ENCODE measurements at regions of chr14 and their contacts with region 1.

Region 1: GRCh38 chr14:67426983-67427606 is 15.1 kb upstream of the PLEK2 start:
- DNase-seq: no peak
- ATAC-seq: peak; percentile 95
- H3K4me3 ChIP-seq: no peak overlapping the region
- H3K27ac ChIP-seq: no peak overlapping the region
- H3K4me1 ChIP-seq: no peaks in the 10 kb centered on the region
- H3K27me3 ChIP-seq: peaks cover 0 to 6% of the 10 kb centered on the region in 2 experiments; a peak in 2 of 4 replicates
- CTCF ChIP-seq: peak; percentile 84 to 90 (median 87)
- EP300 ChIP-seq: no peak
- POLR2A ChIP-seq: no peak
- RAD21 ChIP-seq: peak; percentile 99

Region 2: GRCh38 chr14:67487937-67488893 is 61.1 kb after region 1 on chr14 and contains the start of gene TMEM229B:
- CTCF ChIA-PET with region 1: interaction called, 28 read pairs
- POLR2A ChIA-PET with region 1: interaction called, 3 read pairs
- RAD21 ChIA-PET with region 1: interaction called, 12 read pairs
- SMC1A ChIA-PET with region 1: interaction called, 3 read pairs
- in situ Hi-C with region 1: no loop called
- intact Hi-C with region 1: no loop called
- DNase-seq: peak; percentile 94
- ATAC-seq: peak; percentile 95
- H3K4me3 ChIP-seq: peak within 1 kb of the TSS; percentile 50; the same call in 1 of the 2 replicates
- H3K27ac ChIP-seq: peak within 1 kb of the TSS; percentile 96
- H3K4me1 ChIP-seq: peaks cover 47% of the 10 kb centered on the region
- H3K27me3 ChIP-seq: no peaks in the 10 kb centered on the region
- CTCF ChIP-seq: no peak
- EP300 ChIP-seq: peak; percentile 81 to 88
- POLR2A ChIP-seq: no peak; the same call in 1 of the 2 replicates
- RAD21 ChIP-seq: peak; percentile 28; the same call in 1 of the 2 replicates
- polyA plus RNA-seq, gene TMEM229B: 0.24 to 0.32 TPM

Region 3: GRCh38 chr14:67526676-67527459 is 99.8 kb after region 1 on chr14:
- CTCF ChIA-PET with region 1: interaction called, 75 read pairs
- POLR2A ChIA-PET with region 1: no interaction called
- RAD21 ChIA-PET with region 1: interaction called, 25 read pairs
- SMC1A ChIA-PET with region 1: interaction called, 42 read pairs
- in situ Hi-C with region 1: no loop called
- intact Hi-C with region 1: loop called (anchors 1 kb)
- DNase-seq: peak; percentile 13
- ATAC-seq: peak; percentile 96
- H3K4me3 ChIP-seq: no peak overlapping the region
- H3K27ac ChIP-seq: no peak overlapping the region
- H3K4me1 ChIP-seq: no peaks in the 10 kb centered on the region
- H3K27me3 ChIP-seq: peaks cover 0 to 9% of the 10 kb centered on the region in 2 experiments; a peak in 1 of 4 replicates
- CTCF ChIP-seq: peak; percentile 53 to 82 (median 62)
- EP300 ChIP-seq: no peak
- POLR2A ChIP-seq: no peak
- RAD21 ChIP-seq: peak; percentile 68

Region 4: GRCh38 chr14:67541448-67542387 is 114.6 kb after region 1 on chr14:
- CTCF ChIA-PET with region 1: interaction called, 12 read pairs
- POLR2A ChIA-PET with region 1: no interaction called
- RAD21 ChIA-PET with region 1: no interaction called
- SMC1A ChIA-PET with region 1: interaction called, 5 read pairs
- in situ Hi-C with region 1: no loop called
- intact Hi-C with region 1: no loop called
- DNase-seq: no peak
- ATAC-seq: peak; percentile 79
- H3K4me3 ChIP-seq: peak overlapping the region; percentile 63; the same call in 1 of the 2 replicates
- H3K27ac ChIP-seq: no peak overlapping the region
- H3K4me1 ChIP-seq: peaks cover 7% of the 10 kb centered on the region; the same call in 1 of the 2 replicates
- H3K27me3 ChIP-seq: peaks cover 0 to 2% of the 10 kb centered on the region in 2 experiments; a peak in 3 of 4 replicates
- CTCF ChIP-seq: no peak
- EP300 ChIP-seq: no peak
- POLR2A ChIP-seq: peak; percentile 44; the same call in 1 of the 2 replicates
- RAD21 ChIP-seq: no peak

Region 5: DNA sequence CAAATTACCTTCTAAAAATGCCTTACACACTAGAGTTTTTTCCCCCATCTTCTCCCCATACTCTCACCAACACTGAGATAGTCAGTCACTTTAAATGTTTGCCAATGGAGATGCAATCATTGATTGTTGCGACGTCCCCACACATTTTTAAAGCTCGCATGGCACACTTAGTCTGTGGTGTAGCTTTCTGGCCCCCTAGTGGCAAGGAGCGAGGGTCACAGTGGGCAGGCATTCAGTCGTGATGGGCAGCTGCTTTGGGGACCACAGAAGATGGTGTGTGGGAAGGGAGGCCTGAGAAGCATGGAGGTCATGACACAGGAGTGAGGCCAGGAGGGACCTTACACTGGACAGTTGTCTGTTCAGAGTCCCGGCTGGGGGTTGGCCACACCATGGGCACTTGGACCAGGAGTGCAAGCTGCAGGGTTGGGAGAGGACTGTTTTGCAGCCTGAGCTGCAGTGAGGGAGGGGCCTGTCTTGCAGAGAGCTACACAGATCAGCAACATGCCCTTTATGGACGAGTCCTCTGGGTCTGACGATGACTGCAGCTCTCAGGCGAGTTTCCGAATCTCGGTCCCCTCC is 144.3 kb after region 1 on chr14:
- CTCF ChIA-PET with region 1: interaction called, 583 read pairs
- POLR2A ChIA-PET with region 1: interaction called, 5 read pairs
- RAD21 ChIA-PET with region 1: interaction called, 176 read pairs
- SMC1A ChIA-PET with region 1: interaction called, 185 read pairs
- in situ Hi-C with region 1: loop called (anchors 5 kb)
- intact Hi-C with region 1: loop called (anchors 1 kb)
- DNase-seq: no peak
- ATAC-seq: peak; percentile 98
- H3K4me3 ChIP-seq: no peak overlapping the region
- H3K27ac ChIP-seq: no peak overlapping the region
- H3K4me1 ChIP-seq: no peaks in the 10 kb centered on the region
- H3K27me3 ChIP-seq: no peaks in the 10 kb centered on the region
- CTCF ChIP-seq: peak; percentile 91 to 96 (median 96); a peak in 5 of 6 replicates
- EP300 ChIP-seq: no peak
- POLR2A ChIP-seq: no peak
- RAD21 ChIP-seq: peak; percentile 92

Region 6: DNA sequence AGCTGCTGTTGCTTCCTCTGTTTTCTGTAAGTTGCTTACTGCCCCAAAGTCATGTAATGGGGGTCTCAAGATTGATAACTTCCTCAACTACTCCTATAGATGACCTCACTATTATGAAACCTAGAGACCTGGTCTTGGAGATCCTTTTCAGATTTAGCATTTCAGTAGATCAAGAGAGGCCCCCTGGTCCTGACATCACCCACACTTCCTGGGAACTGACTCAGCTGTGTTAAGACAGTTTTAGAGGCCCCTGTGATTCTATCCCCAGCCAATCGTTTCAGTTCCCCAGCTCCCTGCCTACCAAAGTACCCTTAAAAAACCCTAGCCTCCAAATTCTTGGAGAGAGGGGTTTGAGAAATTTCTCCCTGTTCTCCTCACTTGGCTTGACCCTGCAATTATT is 183.4 kb after region 1 on chr14:
- CTCF ChIA-PET with region 1: interaction called, 13 read pairs
- POLR2A ChIA-PET with region 1: no interaction called
- RAD21 ChIA-PET with region 1: interaction called, 3 read pairs
- SMC1A ChIA-PET with region 1: interaction called, 8 read pairs
- in situ Hi-C with region 1: no loop called
- intact Hi-C with region 1: no loop called
- DNase-seq: no peak
- ATAC-seq: no peak
- H3K4me3 ChIP-seq: no peak overlapping the region
- H3K27ac ChIP-seq: no peak overlapping the region
- H3K4me1 ChIP-seq: no peaks in the 10 kb centered on the region
- H3K27me3 ChIP-seq: no peaks in the 10 kb centered on the region
- CTCF ChIP-seq: no peak
- EP300 ChIP-seq: no peak
- POLR2A ChIP-seq: no peak
- RAD21 ChIP-seq: no peak